Natural killer cell (primary cell): ENCODE measurements at regions of chr5 and their contacts with region 1.

Region 1: DNA sequence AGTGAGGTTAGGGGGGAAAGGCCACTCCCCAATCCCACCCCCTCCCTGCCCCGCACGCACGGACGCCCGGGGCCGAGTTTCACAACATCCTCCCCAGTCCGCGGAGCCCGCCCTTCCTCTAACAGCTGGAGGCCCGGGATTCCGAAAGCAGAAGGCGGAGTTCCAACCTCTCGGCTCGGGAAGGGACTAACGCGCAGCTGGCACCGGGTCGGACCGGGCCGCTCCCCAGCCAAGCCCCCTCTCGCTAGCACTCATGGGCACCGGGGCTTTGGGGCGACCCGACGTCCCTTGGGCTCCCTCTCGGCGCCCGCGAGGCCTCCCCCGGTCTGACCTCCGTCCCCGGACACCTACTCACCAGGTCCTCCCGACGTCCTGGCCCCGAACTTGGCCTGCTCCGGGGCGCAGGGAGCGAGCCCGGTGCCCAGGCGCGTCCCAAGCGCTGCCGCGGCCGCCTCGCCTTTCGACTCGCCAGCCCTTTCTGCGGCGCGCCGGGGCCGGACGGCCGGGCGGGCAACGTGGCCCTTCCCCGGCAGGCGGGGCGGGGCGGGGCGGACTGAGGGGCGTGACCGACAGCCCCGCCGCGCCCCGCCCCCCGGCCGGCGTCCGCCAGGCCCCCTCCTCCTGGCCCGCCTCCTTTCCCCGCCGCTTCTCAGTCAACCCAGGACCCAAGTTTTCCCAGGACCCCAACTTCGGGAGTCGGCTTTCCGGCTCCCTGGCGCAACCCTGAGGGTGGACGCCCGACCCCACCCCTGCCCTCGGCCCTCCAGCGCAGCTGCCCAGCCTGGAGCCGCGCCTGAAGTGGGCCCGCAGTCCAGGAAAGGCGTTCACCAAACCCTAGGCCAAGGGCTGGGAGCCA is at the start of gene MGAT1:
- DNase-seq: peak; percentile 81 to 83
- ATAC-seq: peak; percentile 66 to 84 (median 72)
- H3K4me3 ChIP-seq: peak within 1 kb of the TSS; percentile 88
- H3K4me3 Mint-ChIP-seq: peak within 1 kb of the TSS; percentile 93
- H3K27ac ChIP-seq: peak within 1 kb of the TSS; percentile 78
- H3K27ac Mint-ChIP-seq: peak within 1 kb of the TSS; percentile 83 to 96
- H3K4me1 ChIP-seq: peaks cover 81% of the 10 kb centered on the region
- H3K4me1 Mint-ChIP-seq: peaks cover 82% of the 10 kb centered on the region in 2 donors
- H3K27me3 ChIP-seq: no peaks in the 10 kb centered on the region
- H3K27me3 Mint-ChIP-seq: no peaks in the 10 kb centered on the region
- CTCF ChIP-seq: no peak
- total RNA-seq, gene MGAT1: 105 to 149 (median 130) TPM

Region 2: GRCh38 chr5:180631509-180632395 is 170.8 kb before region 1 on chr5:
- intact Hi-C with region 1: no loop called
- DNase-seq: no peak
- ATAC-seq: no peak
- H3K4me3 ChIP-seq: no peak overlapping the region
- H3K4me3 Mint-ChIP-seq: no peak overlapping the region
- H3K27ac ChIP-seq: no peak overlapping the region
- H3K27ac Mint-ChIP-seq: no peak overlapping the region
- H3K4me1 ChIP-seq: no peaks in the 10 kb centered on the region
- H3K4me1 Mint-ChIP-seq: no peaks in the 10 kb centered on the region
- H3K27me3 ChIP-seq: no peaks in the 10 kb centered on the region
- H3K27me3 Mint-ChIP-seq: no peaks in the 10 kb centered on the region
- CTCF ChIP-seq: no peak

Region 3: GRCh38 chr5:180831139-180832048 is 28.8 kb after region 1 on chr5:
- intact Hi-C with region 1: loop called (anchors 5 kb)
- DNase-seq: peak; percentile 78 to 82
- ATAC-seq: peak; percentile 80 to 87 (median 81)
- H3K4me3 ChIP-seq: peak overlapping the region; percentile 95
- H3K4me3 Mint-ChIP-seq: peak overlapping the region; percentile 95
- H3K27ac ChIP-seq: peak overlapping the region; percentile 98
- H3K27ac Mint-ChIP-seq: peak overlapping the region; percentile 90 to 99
- H3K4me1 ChIP-seq: peaks cover 35% of the 10 kb centered on the region
- H3K4me1 Mint-ChIP-seq: peaks cover 33 to 48% of the 10 kb centered on the region in 2 donors
- H3K27me3 ChIP-seq: no peaks in the 10 kb centered on the region
- H3K27me3 Mint-ChIP-seq: no peaks in the 10 kb centered on the region
- CTCF ChIP-seq: peak; percentile 3

Region 4: DNA sequence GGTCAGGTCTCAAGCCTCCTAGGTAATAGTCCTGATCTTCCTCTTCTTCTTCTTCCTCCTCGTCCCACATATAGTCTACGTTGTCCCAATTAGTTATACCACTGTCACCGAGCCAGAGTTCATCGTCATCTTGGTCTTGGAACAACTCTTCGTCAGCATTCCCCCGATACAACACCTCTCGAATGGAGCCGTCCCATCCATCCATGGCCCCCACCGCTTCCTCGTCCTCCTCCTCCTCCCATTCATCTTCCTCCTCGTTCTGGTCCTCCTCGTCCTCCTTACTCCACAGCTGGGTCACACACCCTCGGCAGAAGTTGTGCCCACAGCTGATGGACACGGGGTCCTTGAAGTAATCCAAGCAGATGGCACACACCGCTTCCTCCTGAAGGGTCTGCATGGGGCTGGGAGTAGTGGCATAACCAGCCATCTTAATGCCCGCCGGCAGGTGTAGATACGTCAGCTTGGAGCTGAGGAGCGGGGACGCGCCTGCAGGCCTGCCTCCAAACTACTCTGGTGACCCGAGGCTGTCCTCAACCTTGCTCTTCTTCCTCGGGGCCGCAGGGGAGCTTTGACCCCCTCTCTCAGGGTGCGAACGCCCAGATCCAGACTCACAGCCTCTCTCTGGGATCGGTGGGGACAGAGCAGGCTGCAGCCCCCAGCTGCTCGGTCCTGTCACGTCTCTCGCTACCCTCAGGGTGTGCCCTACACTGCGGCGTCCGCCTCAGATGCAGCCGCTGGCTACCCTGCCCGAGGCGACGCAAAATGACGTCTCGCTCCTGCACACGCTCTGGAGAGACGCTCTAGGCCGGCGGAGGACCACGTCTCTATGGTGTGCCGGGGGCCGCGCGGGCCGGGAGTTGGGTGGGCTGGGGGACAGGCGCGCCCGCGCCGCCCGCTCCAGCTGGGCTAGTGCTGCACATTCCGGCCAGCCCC is 458.1 kb after region 1 on chr5 and contains the start of gene TRIM52:
- intact Hi-C with region 1: loop called (anchors 5 kb)
- DNase-seq: peak; percentile 87 to 96
- ATAC-seq: peak; percentile 77 to 95 (median 83)
- H3K4me3 ChIP-seq: peak within 1 kb of the TSS; percentile 92
- H3K4me3 Mint-ChIP-seq: peak within 1 kb of the TSS; percentile 99
- H3K27ac ChIP-seq: peak within 1 kb of the TSS; percentile 98
- H3K27ac Mint-ChIP-seq: peak within 1 kb of the TSS; percentile 98 to 99
- H3K4me1 ChIP-seq: peaks cover 41% of the 10 kb centered on the region
- H3K4me1 Mint-ChIP-seq: peaks cover 46 to 57% of the 10 kb centered on the region in 2 donors
- H3K27me3 ChIP-seq: no peaks in the 10 kb centered on the region
- H3K27me3 Mint-ChIP-seq: no peaks in the 10 kb centered on the region
- CTCF ChIP-seq: no peak
- total RNA-seq, gene TRIM52: 43.4 to 60.0 (median 44.4) TPM